Mammary epithelial cell (primary cell): ENCODE measurements at regions of chr4 and their contacts with region 1.

Region 1: DNA sequence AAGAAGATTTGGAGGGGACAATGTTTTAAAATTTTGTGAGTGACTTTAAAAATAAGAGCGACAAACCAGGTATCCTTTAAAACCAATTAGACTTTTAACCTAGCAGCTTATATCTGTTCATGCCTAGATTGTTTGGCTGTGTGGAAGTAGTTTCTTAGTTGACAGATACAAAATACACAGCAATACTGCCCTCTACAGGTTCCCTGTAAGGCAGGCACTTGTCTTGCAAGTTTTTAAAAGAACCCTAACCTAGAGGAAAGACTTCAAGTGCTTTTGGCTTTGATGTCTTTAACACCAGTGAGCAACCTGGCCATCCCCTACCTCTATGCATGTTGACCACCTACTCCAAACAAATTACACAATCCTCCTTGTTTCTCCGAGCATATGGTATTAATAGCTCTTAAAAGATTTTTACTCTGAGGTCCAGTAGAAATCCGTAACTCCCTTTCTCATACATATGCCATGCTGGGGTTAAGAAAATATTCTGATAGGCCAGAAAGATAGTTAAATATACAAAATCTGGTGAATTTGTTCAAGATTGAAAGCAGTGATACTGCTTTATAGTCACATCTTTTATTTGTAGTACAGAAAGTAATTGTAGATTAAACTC is 273.0 kb downstream of the ARHGAP24 start:
- DNase-seq: peak; percentile 51
- H3K4me3 ChIP-seq: no peak overlapping the region
- H3K27ac ChIP-seq: no peak overlapping the region
- H3K4me1 ChIP-seq: peaks cover 6% of the 10 kb centered on the region
- H3K27me3 ChIP-seq: no peaks in the 10 kb centered on the region
- CTCF ChIP-seq: peak; percentile 87 to 90

Region 2: DNA sequence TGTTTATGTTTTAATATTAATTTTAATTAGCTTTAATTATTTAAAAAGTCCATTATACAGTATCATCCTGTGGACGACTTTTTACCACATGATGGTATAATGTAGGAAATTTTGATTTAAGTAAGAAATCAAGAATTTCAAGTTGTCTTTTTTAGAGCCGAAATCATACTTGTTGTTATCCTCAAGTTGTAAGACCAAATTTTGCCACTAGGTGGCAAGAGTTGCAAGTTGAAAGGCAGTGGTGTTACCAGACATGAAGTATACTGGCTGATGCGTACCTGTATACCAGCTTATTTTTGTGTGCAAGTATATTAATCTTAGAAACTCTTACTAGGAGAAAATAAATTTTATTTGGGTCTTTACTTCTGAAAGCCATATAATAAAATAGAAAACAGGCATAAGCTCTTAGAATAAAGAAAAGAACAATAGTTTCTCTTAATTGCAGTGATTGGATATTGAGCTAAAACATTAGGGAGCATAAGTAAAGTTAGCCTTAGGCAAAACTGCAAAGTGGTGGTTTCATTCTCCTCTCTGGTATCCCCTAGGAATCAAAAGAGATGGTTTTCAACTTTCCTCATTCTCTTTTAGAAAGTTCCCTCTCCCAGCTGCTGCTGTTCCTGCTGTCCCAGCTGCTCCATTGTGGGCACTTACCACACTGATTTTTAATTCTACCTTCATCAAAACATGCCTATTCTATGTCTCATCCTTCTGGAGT is 663.5 kb before region 1 on chr4:
- CTCF ChIA-PET with region 1: no interaction called
- dilution Hi-C with region 1: no loop called
- in situ Hi-C with region 1: no loop called
- intact Hi-C with region 1: loop called (anchors 1 kb)
- DNase-seq: peak; percentile 56
- H3K4me3 ChIP-seq: no peak overlapping the region
- H3K27ac ChIP-seq: no peak overlapping the region
- H3K4me1 ChIP-seq: no peaks in the 10 kb centered on the region
- H3K27me3 ChIP-seq: peaks cover 5% of the 10 kb centered on the region
- CTCF ChIP-seq: peak; percentile 59 to 73

Region 3: GRCh38 chr4:85147439-85148076 is 600.4 kb before region 1 on chr4:
- CTCF ChIA-PET with region 1: no interaction called
- dilution Hi-C with region 1: no loop called
- in situ Hi-C with region 1: loop called (anchors 25 kb)
- intact Hi-C with region 1: loop called (anchors 2 kb)
- DNase-seq: peak; percentile 41
- H3K4me3 ChIP-seq: no peak overlapping the region
- H3K27ac ChIP-seq: no peak overlapping the region
- H3K4me1 ChIP-seq: peaks cover 3% of the 10 kb centered on the region
- H3K27me3 ChIP-seq: no peaks in the 10 kb centered on the region
- CTCF ChIP-seq: peak; percentile 47 to 61

Region 4: DNA sequence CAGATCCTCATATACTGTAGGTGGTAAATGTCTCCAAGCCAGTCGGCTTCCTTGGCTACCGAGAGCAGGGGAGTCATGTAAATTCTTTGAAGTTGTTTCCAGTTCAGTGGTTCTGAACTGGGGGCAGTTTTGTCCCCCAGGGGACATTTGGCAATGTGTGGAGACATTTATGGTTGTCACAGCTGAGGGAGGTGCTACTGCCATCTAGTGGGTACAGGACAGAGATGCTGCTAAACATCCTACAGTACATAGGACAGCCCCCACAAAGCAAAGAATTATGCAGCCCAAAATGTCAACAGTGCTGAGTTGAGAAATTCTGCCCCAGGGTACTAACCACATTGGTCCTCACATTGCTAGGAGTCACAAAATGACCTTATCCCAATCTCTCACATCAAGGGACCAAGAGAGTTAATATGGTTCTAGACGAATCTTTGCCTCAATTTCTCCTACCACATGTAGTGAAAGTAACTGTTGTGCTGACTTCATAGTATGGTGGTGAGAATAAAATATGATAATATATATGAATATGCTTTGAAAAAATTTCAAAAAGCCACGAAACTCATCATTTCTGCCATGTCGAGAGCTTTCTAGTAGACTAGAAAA is 377.5 kb before region 1 on chr4:
- CTCF ChIA-PET with region 1: no interaction called
- dilution Hi-C with region 1: no loop called
- in situ Hi-C with region 1: no loop called
- intact Hi-C with region 1: loop called (anchors 2 kb)
- DNase-seq: peak; percentile 24
- H3K4me3 ChIP-seq: no peak overlapping the region
- H3K27ac ChIP-seq: no peak overlapping the region
- H3K4me1 ChIP-seq: no peaks in the 10 kb centered on the region
- H3K27me3 ChIP-seq: no peaks in the 10 kb centered on the region
- CTCF ChIP-seq: peak; percentile 53 to 89

Region 5: GRCh38 chr4:85548116-85548515 is 199.9 kb before region 1 on chr4:
- CTCF ChIA-PET with region 1: no interaction called
- dilution Hi-C with region 1: no loop called
- in situ Hi-C with region 1: no loop called
- intact Hi-C with region 1: loop called (anchors 5 kb)
- DNase-seq: no peak
- H3K4me3 ChIP-seq: no peak overlapping the region
- H3K27ac ChIP-seq: no peak overlapping the region
- H3K4me1 ChIP-seq: no peaks in the 10 kb centered on the region
- H3K27me3 ChIP-seq: no peaks in the 10 kb centered on the region
- CTCF ChIP-seq: peak in 1 of 2 donors; percentile 32

Region 6: DNA sequence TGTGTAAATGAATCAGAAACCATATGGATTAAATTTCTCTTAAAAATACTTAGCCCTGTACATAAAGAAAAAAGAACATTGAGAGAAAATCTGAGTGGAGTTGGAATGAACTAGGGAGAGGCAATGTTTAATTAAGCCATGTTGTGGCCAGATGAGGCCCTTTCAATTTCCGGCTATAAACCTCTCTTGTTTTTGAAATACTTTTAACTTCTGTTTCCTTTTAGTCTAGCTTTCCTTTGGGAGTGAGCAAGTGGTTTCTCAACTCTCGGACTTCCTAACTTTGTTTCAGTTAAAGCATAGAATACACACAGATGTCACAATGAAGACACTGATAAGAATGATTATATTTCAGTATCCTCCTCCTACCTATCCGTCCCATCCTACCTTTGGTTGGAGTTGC is 75.9 kb before region 1 on chr4:
- CTCF ChIA-PET with region 1: no interaction called
- dilution Hi-C with region 1: no loop called
- in situ Hi-C with region 1: no loop called
- intact Hi-C with region 1: no loop called
- DNase-seq: no peak
- H3K4me3 ChIP-seq: no peak overlapping the region
- H3K27ac ChIP-seq: no peak overlapping the region
- H3K4me1 ChIP-seq: no peaks in the 10 kb centered on the region
- H3K27me3 ChIP-seq: no peaks in the 10 kb centered on the region
- CTCF ChIP-seq: no peak

Region 7: GRCh38 chr4:85697854-85698253 is 50.1 kb before region 1 on chr4:
- CTCF ChIA-PET with region 1: no interaction called
- dilution Hi-C with region 1: no loop called
- in situ Hi-C with region 1: no loop called
- intact Hi-C with region 1: loop called (anchors 10 kb)
- DNase-seq: no peak
- H3K4me3 ChIP-seq: no peak overlapping the region
- H3K27ac ChIP-seq: no peak overlapping the region
- H3K4me1 ChIP-seq: no peaks in the 10 kb centered on the region
- H3K27me3 ChIP-seq: no peaks in the 10 kb centered on the region
- CTCF ChIP-seq: no peak

Region 8: GRCh38 chr4:85995361-85995760 is 247.4 kb after region 1 on chr4:
- CTCF ChIA-PET with region 1: no interaction called
- dilution Hi-C with region 1: no loop called
- in situ Hi-C with region 1: no loop called
- intact Hi-C with region 1: no loop called
- DNase-seq: no peak
- H3K4me3 ChIP-seq: no peak overlapping the region
- H3K27ac ChIP-seq: no peak overlapping the region
- H3K4me1 ChIP-seq: no peaks in the 10 kb centered on the region
- H3K27me3 ChIP-seq: no peaks in the 10 kb centered on the region
- CTCF ChIP-seq: no peak